OCI-LY7 (cell line): ENCODE measurements at regions of chr11 and their contacts with region 1.

Region 1: DNA sequence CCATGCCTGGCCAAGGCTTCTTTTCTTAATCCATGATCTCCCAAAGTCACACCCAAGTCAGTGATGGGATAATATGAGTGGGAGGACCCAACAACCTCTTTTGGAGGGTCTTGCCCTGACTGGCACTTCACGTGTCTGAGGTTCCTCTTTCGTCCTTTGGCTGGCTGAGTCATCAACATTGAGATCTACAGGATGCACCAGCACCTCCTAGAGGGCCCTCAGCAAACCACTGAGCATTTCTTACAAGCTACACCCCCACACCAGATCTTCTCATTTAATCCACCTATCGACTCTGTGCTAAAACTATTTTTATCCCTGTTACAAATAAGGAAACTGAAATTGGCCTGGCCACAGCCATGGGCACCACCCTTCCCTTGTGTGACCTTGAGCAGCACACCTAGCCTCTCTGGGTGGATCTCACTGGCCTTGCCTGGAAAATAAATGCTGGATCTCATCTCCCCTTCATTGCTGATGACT is 63.4 kb downstream of the FLI1 start:
- DNase-seq: peak; percentile 88
- H3K4me3 ChIP-seq: no peak overlapping the region
- H3K27ac ChIP-seq: peak overlapping the region; percentile 9
- H3K4me1 ChIP-seq: peaks cover 53% of the 10 kb centered on the region
- CTCF ChIP-seq: peak; percentile 93

Region 2: DNA sequence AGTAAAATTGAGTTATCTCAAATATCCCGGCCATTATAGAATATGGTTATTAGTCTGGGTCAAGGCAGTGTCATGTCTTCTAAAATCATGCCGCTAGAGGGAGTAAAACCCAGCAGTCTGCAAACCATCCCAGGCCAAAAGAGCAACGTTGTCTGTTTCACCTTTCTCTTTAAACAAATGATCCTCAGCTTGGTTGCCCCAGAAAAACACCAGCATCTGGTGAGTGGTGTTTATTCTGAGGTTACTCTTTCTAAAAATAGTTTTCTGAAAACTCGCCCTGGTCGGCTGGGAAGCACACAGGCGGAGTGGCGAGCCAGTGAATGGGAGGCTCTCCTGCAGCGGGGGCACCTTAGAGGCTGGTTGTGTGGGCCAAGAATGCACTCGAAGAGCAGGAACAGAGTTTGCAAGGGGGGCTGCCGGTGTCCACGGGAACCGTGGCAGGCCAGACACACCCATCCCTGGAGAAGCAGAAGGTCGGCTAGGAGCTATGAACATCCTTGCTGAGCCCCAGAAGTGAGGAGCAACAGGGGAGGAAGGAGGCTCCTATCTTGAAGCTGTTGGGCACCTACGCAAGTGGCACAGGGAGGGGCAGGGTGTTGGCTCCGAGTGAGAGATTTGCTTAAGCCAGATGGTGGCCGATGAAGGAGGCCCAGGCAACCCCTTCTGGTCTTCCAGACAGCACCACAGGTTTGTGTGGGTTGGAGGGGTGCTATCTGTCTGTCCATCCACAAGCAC is 467.0 kb before region 1 on chr11:
- CTCF ChIA-PET with region 1: no interaction called
- POLR2A ChIA-PET with region 1: no interaction called
- intact Hi-C with region 1: loop called (anchors 5 kb)
- DNase-seq: peak; percentile 92
- H3K4me3 ChIP-seq: peak overlapping the region; percentile 43
- H3K27ac ChIP-seq: peak overlapping the region; percentile 63
- H3K4me1 ChIP-seq: peaks cover 35% of the 10 kb centered on the region
- CTCF ChIP-seq: peak; percentile 99

Region 3: DNA sequence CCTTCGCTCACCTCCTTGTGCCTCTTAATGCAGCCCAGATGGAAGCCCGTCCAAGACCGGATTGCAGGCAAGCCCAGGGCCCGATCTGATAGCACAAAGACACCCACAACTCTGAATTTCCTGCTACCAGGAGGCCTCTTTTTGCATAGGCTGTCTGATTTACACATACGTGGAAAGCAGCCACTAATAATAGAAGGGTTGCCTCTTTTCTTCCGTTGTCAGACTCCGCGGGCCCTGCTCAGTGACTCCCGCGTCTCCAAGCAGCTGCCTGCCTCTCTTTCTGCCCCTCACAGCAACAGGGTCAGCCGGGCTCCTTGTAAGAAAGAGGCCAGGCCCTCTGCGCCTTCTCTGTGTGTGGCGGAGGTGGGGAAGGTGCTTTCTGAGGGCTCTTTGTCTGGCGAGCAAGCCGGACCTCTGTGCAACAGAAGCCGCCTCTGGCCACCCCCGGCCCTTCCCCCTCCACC is 36.7 kb before region 1 on chr11:
- CTCF ChIA-PET with region 1: interaction called, 5 read pairs
- POLR2A ChIA-PET with region 1: interaction called, 14 read pairs
- intact Hi-C with region 1: loop called (anchors 1 kb)
- DNase-seq: peak; percentile 90
- H3K4me3 ChIP-seq: peak overlapping the region; percentile 70
- H3K27ac ChIP-seq: peak overlapping the region; percentile 99
- H3K4me1 ChIP-seq: peaks cover 93% of the 10 kb centered on the region
- CTCF ChIP-seq: no peak

Region 4: DNA sequence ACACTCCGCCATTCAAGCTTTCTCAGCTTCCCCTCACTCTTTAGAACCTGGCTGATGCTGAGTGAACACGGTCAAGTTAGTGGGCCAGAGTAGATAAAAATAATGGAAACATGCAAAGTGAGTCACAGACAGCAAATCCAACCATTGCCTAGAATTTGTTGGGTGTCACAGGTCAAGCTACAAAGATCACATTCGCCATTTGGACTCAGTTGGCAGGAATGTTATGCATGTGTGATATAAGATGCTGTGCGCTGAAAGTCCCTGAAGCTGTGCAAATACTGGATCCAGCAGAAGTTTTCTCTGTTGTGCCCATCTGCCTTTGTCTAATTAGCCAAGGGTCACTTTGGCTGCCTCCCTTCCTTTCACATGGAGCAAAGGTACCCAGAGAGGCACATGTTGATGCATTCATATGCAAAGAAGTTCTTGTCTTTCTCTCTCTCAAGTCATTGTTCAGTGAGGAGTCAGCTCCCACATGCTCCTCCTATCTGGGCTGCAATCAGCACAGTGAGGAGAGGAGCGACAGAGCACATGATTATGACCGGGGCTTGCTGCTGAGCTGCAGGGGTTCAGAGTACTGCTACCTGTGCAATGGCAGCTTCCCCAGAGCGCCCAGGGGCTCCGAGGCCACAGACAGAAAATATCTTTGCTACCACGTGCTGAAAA is 23.7 kb before region 1 on chr11:
- CTCF ChIA-PET with region 1: interaction called, 9 read pairs
- POLR2A ChIA-PET with region 1: interaction called, 47 read pairs
- intact Hi-C with region 1: loop called (anchors 2 kb)
- DNase-seq: peak; percentile 83
- H3K4me3 ChIP-seq: peak overlapping the region; percentile 50
- H3K27ac ChIP-seq: peak overlapping the region; percentile 99
- H3K4me1 ChIP-seq: peaks cover 100% of the 10 kb centered on the region
- CTCF ChIP-seq: no peak